Heart right ventricle (tissue), 16 donors: ENCODE measurements at regions of chr2 and their contacts with region 1.

Region 1: DNA sequence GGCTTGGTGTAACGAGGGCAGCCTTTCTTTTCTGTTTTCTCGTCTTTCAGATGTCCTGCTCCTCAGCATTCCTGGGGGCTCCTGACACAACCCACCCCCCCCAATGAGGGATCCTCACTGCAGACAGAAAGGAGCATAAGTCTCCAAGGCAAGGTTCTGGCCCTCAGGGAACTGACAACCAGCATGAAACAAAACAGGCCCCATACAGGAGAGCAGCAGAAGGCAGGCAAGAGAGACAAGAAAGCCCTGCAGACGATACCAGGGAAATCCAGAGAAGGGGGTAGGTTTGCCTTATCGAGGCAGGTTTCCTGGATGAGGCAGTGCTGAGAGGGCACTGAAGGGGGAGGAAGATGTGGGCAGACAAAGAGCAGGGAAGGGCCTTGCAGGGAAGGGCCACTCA is 103.9 kb upstream of the EPAS1 start:
- DNase-seq: no peak
- ATAC-seq: no peak
- H3K4me3 ChIP-seq: no peak overlapping the region
- H3K27ac ChIP-seq: no peak overlapping the region
- H3K4me1 ChIP-seq: peaks cover 8 to 32% (median 18%) of the 10 kb centered on the region in 9 donors
- H3K27me3 ChIP-seq: no peaks in the 10 kb centered on the region
- CTCF ChIP-seq: no peak

Region 2: GRCh38 chr2:46134531-46135181 is 58.7 kb before region 1 on chr2:
- intact Hi-C with region 1: no loop called
- DNase-seq: peak; percentile 36 to 68
- ATAC-seq: peak; percentile 59 to 87 (median 77)
- H3K4me3 ChIP-seq: no peak overlapping the region
- H3K27ac ChIP-seq: peak overlapping the region; percentile 54 to 85 (median 73)
- H3K4me1 ChIP-seq: peaks cover 5 to 49% (median 32%) of the 10 kb centered on the region in 9 donors
- H3K27me3 ChIP-seq: no peaks in the 10 kb centered on the region
- CTCF ChIP-seq: peak in 1 of 9 donors; percentile 11

Region 3: GRCh38 chr2:46252891-46253669 is 59.7 kb after region 1 on chr2:
- intact Hi-C with region 1: loop called in 1 of 10 experiments (anchors 5 kb)
- DNase-seq: peak; percentile 63 to 76
- ATAC-seq: peak; percentile 30 to 87 (median 76)
- H3K4me3 ChIP-seq: no peak overlapping the region
- H3K27ac ChIP-seq: peak overlapping the region in 8 of 10 donors; percentile 15 to 56 (median 44)
- H3K4me1 ChIP-seq: peaks cover 12 to 59% (median 41%) of the 10 kb centered on the region in 9 donors
- H3K27me3 ChIP-seq: no peaks in the 10 kb centered on the region
- CTCF ChIP-seq: no peak